ENCODE measurements at regions of chr10 and their contacts with region 1.

Region 1: GRCh38 chr10:70815504-70816219 is at the start of gene SGPL1:
- DNase-seq: peak; percentile 79
- H3K4me3 Mint-ChIP-seq: peak within 1 kb of the TSS; percentile 93
- H3K27ac Mint-ChIP-seq: peak within 1 kb of the TSS; percentile 83
- H3K4me1 Mint-ChIP-seq: peaks cover 28% of the 10 kb centered on the region
- H3K27me3 Mint-ChIP-seq: no peaks in the 10 kb centered on the region
- total RNA-seq, gene SGPL1: 124 and 139 TPM in 2 replicates

Region 2: DNA sequence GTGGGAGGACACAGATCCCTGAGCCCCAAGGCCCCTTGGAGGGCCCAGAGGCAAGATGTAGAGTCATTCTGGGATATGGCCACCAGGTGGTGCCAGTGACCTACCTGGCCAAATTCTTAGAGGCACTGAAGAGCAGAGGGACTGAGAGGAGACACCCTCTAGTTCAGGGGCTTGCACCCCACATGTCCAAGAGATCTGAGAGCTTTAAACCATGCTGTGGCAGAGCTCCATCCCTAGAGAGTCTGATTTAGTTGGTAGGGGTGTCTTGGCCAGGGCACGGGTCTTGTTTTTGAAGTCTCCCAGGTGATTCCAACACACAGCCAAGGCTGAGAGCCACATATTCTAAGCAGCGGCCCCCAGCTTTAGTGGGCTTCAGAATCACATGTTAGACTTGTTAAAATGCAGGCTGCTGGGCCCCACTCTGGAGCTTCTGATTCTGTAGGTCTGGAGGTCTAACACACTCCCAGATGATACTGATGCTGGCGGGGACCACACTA is 265.7 kb before region 1 on chr10:
- intact Hi-C with region 1: loop called (anchors 2 kb)
- DNase-seq: peak; percentile 56
- H3K4me3 Mint-ChIP-seq: no peak overlapping the region
- H3K27ac Mint-ChIP-seq: no peak overlapping the region
- H3K4me1 Mint-ChIP-seq: no peaks in the 10 kb centered on the region
- H3K27me3 Mint-ChIP-seq: no peaks in the 10 kb centered on the region

Region 3: DNA sequence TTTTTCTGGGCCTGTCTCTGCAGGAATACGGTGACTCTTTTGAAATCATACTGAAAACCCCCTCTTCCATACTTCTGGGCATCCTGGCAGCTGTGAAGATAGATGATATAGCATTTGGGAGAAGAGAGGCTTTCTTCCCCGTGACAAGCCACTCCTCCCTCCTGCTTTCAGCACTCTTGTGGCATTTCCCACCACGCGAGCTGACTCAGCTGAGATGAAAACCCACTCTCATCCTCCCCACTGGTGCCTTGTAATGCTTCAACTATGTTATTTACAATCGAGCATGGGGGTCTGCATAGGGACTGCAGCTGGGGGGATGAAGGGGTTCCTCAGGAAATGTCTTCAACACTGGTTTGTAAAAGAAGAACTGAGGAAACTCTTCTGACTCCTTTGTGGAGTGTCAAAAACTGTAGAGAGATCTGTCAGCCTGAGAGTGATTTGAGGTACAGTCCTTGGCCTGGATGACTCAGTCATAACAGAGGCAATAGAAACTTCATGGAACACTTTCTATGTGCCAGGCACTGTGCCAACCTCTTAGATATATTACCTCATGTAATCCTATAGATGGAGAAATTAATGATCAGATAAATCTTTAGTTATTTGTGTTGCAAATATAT is 28.8 kb before region 1 on chr10:
- intact Hi-C with region 1: no loop called
- DNase-seq: no peak
- H3K4me3 Mint-ChIP-seq: no peak overlapping the region
- H3K27ac Mint-ChIP-seq: no peak overlapping the region
- H3K4me1 Mint-ChIP-seq: peaks cover 8% of the 10 kb centered on the region
- H3K27me3 Mint-ChIP-seq: peaks cover 38% of the 10 kb centered on the region

Region 4: GRCh38 chr10:70832852-70833528 is 17.3 kb after region 1 on chr10:
- intact Hi-C with region 1: loop called (anchors 2 kb)
- DNase-seq: no peak
- H3K4me3 Mint-ChIP-seq: peak overlapping the region; percentile 47
- H3K27ac Mint-ChIP-seq: peak overlapping the region; percentile 87
- H3K4me1 Mint-ChIP-seq: peaks cover 66% of the 10 kb centered on the region
- H3K27me3 Mint-ChIP-seq: no peaks in the 10 kb centered on the region

Region 5: GRCh38 chr10:70880077-70880534 is 64.4 kb after region 1 on chr10:
- intact Hi-C with region 1: loop called (anchors 1 kb)
- DNase-seq: peak; percentile 61
- H3K4me3 Mint-ChIP-seq: no peak overlapping the region
- H3K27ac Mint-ChIP-seq: peak overlapping the region; percentile 51
- H3K4me1 Mint-ChIP-seq: peaks cover 16% of the 10 kb centered on the region
- H3K27me3 Mint-ChIP-seq: no peaks in the 10 kb centered on the region

Region 6: DNA sequence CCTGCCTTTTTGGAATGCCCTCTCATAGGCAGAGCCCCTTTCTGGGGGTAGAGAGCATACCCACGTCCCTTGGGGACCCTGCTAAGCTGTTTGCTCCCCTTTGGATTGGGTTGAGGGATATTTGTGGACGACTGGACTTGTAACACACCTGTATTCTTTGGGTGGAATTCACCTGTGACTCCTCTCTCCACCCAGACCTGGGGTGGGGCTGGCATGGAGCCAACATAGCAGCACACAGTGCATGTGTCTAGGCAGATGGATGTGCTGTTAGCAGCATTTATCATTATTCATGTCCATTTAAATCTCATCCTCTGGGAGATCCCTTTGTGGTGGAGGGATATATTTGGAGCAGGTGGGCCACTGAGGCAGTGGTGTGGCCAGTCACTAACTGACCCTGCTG is 632.0 kb after region 1 on chr10:
- intact Hi-C with region 1: no loop called
- DNase-seq: no peak
- H3K4me3 Mint-ChIP-seq: no peak overlapping the region
- H3K27ac Mint-ChIP-seq: no peak overlapping the region
- H3K4me1 Mint-ChIP-seq: no peaks in the 10 kb centered on the region
- H3K27me3 Mint-ChIP-seq: no peaks in the 10 kb centered on the region